Right ventricle myocardium superior (tissue), 1 donor: ENCODE measurements at regions of chr11 and their contacts with region 1.

Region 1: GRCh38 chr11:76919887-76920746 is 59.4 kb downstream of the ACER3 start:
- DNase-seq: peak; percentile 83
- ATAC-seq: peak; percentile 95

Region 2: DNA sequence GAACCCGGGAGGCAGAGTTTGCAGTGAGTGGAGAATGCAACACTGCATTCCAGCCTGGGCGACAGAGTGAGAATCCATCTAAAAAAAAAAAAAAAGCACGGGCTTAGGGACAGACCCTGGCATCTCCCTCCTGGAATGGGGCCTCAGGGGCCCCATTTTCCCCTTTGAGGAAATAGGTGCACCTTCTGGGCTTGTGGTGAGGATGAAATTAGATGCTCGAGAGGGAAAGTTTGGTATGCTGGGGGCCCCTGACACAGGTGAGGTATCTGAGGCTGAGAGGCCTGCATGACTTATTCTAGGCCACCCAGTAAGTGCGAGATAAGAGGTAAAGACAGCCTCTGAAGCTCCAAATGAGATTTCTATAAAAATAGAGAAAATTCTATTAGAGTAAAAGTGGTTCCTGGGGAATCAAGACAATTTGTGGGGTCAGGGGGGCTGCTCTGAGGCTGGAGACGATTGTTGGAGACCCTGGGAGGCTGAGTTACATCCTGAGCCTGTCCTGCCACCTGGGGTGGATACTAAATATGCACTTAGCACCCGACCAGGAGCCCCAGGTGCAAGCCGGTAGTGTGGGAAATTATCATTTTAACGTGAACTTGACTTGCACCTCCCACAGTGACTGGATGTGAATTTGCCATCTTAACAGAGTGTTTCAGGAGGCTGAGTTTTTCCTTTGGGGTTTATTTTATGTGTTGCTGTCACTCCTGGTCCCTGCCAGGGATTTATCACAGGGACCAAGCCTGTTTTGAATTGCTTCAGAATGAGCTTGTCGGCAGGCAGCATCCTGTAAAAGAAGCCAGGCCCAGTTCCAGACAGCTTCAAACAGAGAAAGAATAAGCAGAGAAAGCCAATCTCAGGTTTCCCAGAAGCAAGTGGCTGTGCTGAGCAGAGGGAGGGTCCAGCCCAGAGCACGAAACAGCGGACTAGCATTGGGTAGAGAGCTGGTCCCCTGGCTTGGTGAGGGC is 185.4 kb before region 1 on chr11:
- intact Hi-C with region 1: loop called (anchors 5 kb)
- DNase-seq: no peak
- ATAC-seq: no peak

Region 3: GRCh38 chr11:76810151-76810853 is 109.8 kb before region 1 on chr11:
- intact Hi-C with region 1: loop called (anchors 2 kb)
- DNase-seq: no peak
- ATAC-seq: peak; percentile 35

Region 4: GRCh38 chr11:76860539-76861475 is 59.3 kb before region 1 on chr11 and contains the start of gene ACER3:
- intact Hi-C with region 1: loop called (anchors 10 kb)
- DNase-seq: peak; percentile 96
- ATAC-seq: peak; percentile 99
- total RNA-seq, gene ACER3: 10.3 TPM